Sciatic nerve (tissue), 2 donors: ENCODE measurements at regions of chr9 and their contacts with region 1.

Region 1: DNA sequence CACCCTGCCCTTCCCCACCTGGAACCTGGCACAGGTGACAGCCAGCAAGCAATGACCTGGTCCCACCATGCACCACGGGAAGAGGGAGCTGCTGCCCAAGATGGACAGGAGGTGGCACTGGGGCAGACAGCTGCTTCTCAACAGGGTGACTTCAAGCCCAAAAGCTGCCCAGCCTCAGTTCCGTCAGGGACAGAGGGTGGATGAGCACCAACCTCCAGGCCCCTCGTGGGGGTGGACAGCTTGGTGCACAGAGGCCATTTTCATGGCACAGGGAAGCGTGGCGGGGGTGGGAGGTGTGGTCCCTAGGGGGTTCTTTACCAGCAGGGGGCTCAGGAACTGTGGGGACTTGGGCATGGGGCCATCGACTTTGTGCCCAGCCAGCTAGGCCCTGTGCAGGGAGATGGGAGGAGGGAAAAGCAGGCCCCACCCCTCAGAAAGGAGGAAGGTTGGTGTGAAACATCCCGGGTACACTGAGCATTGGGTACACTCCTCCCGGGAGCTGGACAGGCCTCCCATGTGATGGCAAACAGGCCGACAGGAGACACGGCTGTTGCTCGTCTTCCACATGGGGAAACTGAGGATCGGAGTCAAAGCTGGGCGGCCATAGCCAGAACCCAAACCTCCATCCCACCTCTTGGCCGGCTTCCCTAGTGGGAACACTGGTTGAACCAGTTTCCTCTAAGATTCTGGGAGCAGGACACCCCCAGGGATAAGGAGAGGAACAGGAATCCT is 1.9 kb downstream of the CEL start:
- DNase-seq: no peak
- ATAC-seq: no peak

Region 2: GRCh38 chr9:133042676-133043075 is 21.0 kb before region 1 on chr9:
- intact Hi-C with region 1: loop called (anchors 2 kb)
- DNase-seq: no peak
- ATAC-seq: no peak

Region 3: GRCh38 chr9:133144137-133144903 is 80.7 kb after region 1 on chr9:
- intact Hi-C with region 1: no loop called
- DNase-seq: peak; percentile 82
- ATAC-seq: peak; percentile 49

Region 4: GRCh38 chr9:133558191-133559126 is 494.8 kb after region 1 on chr9:
- intact Hi-C with region 1: no loop called
- DNase-seq: no peak
- ATAC-seq: peak; percentile 56